ENCODE measurements at regions of chr3 and their contacts with region 1.

Region 1: DNA sequence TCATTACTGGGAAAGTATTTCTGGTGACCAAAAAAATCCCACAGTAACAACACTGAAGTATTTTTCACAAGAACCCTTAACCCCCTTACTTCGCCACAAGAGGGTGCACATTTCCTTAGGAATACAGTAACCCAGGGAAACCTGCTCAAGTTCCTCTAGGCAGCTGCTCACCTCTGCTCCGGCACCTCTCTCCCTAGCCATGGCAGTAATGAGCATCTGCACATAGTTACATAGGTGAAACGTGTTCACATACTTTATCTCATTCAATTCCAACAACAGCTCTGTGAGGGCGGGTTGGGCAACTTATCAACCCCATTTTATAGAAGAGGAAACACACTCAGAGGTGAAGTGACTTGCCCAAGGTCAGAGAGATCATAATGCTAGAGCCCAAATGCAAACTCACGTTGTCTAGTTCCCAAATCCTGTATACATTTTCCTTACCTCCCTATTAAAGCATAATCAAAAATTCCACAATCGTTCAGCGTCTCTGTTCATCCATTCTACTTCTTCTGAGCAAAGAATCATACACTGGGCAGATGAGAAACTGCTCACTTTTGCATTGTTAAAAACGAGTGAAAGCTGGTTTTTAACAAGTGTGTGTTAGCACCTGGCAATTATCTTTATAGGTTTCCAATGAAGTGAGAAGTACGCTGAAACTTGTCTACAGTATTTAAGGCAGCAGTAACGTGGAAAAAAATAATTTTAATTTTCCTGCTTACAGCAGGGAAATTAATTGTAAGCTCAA is 90.7 kb downstream of the IGF2BP2 start:
- DNase-seq: no peak
- H3K4me3 ChIP-seq: no peak overlapping the region
- H3K27ac ChIP-seq: no peak overlapping the region
- H3K4me1 ChIP-seq: peaks cover 0 to 15% (median 4%) of the 10 kb centered on the region in 4 experiments; a peak in 5 of 7 replicates
- H3K27me3 ChIP-seq: no peaks in the 10 kb centered on the region
- CTCF ChIP-seq: peak; percentile 8 to 75 (median 71)
- EP300 ChIP-seq: no peak
- POLR2A ChIP-seq: no peak
- RAD21 ChIP-seq: peak; percentile 91 to 93

Region 2: DNA sequence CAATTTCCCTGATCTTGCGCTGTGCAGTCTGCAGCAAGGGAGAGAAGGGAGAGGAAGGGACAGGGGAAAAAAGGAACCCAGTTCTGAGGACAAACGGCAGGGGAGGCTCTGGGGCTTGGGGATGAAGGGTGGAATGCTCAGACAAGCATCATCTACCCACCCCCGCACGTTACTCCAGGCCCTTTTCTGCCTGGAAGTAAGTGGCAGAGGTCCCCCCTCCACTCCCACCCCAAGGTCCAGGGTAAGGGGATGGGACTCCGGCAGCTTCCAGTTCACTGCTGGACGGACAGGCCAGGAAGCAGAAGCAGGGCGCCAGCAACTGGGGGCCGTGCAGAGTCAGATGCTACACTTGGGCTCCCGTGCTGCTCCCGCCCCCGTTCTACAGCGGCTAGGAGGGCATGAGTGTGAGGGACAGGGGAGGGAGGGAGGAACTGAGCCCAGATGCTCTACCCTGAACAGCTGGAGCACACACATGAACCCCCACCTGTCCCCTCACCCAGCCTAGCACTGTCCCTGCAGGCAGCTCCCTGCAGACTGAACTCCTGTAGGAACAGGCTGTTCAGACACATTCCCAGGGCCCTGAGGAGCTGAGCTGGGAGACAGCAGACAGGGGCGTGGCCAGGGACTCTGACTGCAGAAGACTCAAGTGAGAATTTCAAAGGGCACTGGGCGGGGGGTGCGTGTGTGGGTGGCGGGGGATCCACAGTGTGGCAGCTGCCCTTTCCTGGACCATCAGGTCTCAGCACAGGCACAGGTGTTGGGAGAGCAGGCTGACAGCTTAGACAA is 88.4 kb before region 1 on chr3:
- CTCF ChIA-PET with region 1: no interaction called
- POLR2A ChIA-PET with region 1: no interaction called
- DNase-seq: no peak
- H3K4me3 ChIP-seq: no peak overlapping the region
- H3K27ac ChIP-seq: no peak overlapping the region; the same call in 1 of the 2 replicates
- H3K4me1 ChIP-seq: peaks cover 5 to 20% (median 12%) of the 10 kb centered on the region in 4 experiments
- H3K27me3 ChIP-seq: no peaks in the 10 kb centered on the region
- CTCF ChIP-seq: no peak
- EP300 ChIP-seq: no peak
- POLR2A ChIP-seq: no peak
- RAD21 ChIP-seq: no peak

Region 3: DNA sequence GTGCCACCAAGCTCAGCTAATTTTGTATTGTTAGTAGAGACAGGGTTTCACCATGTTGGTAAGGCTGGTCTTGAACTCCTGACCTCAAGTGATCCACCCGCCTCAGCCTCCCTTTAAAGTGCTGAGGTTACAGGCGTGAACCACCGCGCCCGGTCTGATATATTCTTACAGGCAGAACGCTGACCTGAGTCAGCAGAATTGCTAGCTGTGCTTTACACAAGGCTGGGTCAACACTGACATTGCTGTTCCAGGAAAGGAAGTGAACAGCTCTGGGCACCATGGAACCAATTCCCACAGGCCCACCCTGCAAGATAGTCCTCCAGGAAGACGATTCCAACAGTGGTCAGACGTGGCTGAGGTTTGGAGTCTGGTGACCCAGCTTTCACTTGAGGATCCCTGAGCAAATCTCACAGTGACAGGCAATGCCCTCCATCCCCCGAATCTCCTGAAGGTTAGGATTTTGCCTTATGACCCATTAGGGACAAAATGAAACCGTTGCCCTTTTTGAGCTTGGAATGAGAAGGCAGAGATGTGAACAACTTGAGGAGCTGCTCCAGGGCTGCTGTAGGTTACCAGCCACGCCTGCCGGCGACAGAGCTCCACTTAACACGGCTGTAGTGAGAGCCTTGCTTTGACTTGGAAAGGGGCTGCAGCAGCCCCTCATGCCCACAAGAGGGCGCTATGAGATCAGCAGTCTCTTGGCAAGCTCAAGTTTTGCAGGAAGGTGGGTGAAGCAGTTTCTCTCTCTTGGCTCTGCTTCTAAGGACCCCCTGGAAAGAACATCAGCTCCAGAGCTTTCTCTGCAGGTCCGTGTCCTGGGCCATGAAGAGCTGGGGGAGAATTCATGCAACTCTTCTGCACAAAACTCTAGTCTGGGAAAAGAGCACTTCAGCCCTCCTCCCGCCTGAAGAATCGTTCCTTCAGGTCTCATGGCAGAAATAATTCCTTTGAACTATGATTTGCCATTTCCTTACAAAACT is 73.9 kb before region 1 on chr3:
- CTCF ChIA-PET with region 1: interaction called, 18 read pairs
- POLR2A ChIA-PET with region 1: no interaction called
- DNase-seq: peak; percentile 61 to 86
- H3K4me3 ChIP-seq: no peak overlapping the region
- H3K27ac ChIP-seq: no peak overlapping the region
- H3K4me1 ChIP-seq: peaks cover 0 to 3% (median under 1%) of the 10 kb centered on the region in 4 experiments; a peak in 3 of 7 replicates
- H3K27me3 ChIP-seq: no peaks in the 10 kb centered on the region
- CTCF ChIP-seq: peak; percentile 92 to 100 (median 93)
- EP300 ChIP-seq: no peak
- POLR2A ChIP-seq: no peak; a peak in 1 of 3 replicates
- RAD21 ChIP-seq: peak; percentile 96 to 97

Region 4: DNA sequence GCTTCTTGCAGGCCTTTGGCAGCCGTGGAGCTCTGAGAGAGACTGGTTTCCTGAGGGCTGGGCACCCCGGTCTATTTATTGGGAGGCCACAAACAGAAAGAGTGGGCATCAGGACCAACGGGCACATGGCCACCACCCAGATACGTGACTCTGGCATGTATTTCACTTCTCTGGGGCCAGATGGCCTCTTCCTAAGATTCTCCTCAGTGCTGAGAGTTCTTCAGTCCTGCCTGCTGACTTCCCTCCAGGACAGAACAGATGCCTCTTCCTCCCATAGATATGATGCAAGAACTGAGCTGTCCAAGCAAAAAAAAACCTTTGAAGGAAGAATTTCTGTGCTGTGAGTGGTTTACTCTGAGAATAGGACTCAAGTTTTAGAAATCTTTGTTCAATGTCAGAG is 17.0 kb before region 1 on chr3:
- CTCF ChIA-PET with region 1: interaction called, 13 read pairs
- POLR2A ChIA-PET with region 1: interaction called, 11 read pairs
- DNase-seq: no peak
- H3K4me3 ChIP-seq: no peak overlapping the region
- H3K27ac ChIP-seq: no peak overlapping the region
- H3K4me1 ChIP-seq: peaks cover 12 to 33% (median 19%) of the 10 kb centered on the region in 4 experiments
- H3K27me3 ChIP-seq: no peaks in the 10 kb centered on the region
- CTCF ChIP-seq: no peak
- EP300 ChIP-seq: no peak
- POLR2A ChIP-seq: no peak
- RAD21 ChIP-seq: no peak

Region 5: GRCh38 chr3:185764163-185764979 is 30.2 kb after region 1 on chr3:
- CTCF ChIA-PET with region 1: interaction called, 345 read pairs
- POLR2A ChIA-PET with region 1: interaction called, 6 read pairs
- DNase-seq: no peak
- H3K4me3 ChIP-seq: no peak overlapping the region
- H3K27ac ChIP-seq: no peak overlapping the region
- H3K4me1 ChIP-seq: peaks cover 0 to 18% (median 8%) of the 10 kb centered on the region in 4 experiments; a peak in 6 of 7 replicates
- H3K27me3 ChIP-seq: no peaks in the 10 kb centered on the region
- CTCF ChIP-seq: no peak
- EP300 ChIP-seq: no peak
- POLR2A ChIP-seq: no peak
- RAD21 ChIP-seq: no peak

Region 6: DNA sequence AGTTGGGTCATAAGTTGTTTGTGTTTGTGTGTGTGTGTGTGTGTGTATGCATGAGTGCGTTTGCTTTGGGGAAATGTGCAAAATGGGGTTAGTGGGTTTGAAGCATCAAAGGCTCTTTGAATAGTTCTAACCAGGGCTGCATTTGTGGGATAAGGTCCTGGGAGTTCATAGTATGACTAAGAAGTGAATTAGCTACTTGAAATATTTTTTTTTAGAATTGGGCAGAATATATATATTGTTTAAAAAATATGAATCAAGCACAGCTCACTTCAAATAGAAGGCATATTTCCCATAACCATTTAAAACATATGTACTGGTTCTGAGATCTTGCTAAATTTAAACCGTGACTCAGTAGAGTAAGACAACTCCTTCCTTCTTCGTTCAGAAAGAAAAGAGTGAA is 47.6 kb after region 1 on chr3:
- CTCF ChIA-PET with region 1: interaction called, 43 read pairs
- POLR2A ChIA-PET with region 1: interaction called, 5 read pairs
- DNase-seq: no peak
- H3K4me3 ChIP-seq: no peak overlapping the region
- H3K27ac ChIP-seq: no peak overlapping the region
- H3K4me1 ChIP-seq: peaks cover 7 to 40% (median 26%) of the 10 kb centered on the region in 4 experiments; a peak in 6 of 7 replicates
- H3K27me3 ChIP-seq: no peaks in the 10 kb centered on the region
- CTCF ChIP-seq: no peak
- EP300 ChIP-seq: no peak
- POLR2A ChIP-seq: no peak
- RAD21 ChIP-seq: no peak

Region 7: GRCh38 chr3:185824476-185825378 is 90.6 kb after region 1 on chr3 and contains the start of gene IGF2BP2:
- CTCF ChIA-PET with region 1: interaction called, 31 read pairs
- POLR2A ChIA-PET with region 1: interaction called, 6 read pairs
- DNase-seq: peak in 1 of 2 experiments; percentile 79
- H3K4me3 ChIP-seq: peak within 1 kb of the TSS; percentile 87 to 99 (median 88)
- H3K27ac ChIP-seq: peak within 1 kb of the TSS; percentile 78
- H3K4me1 ChIP-seq: peaks cover 3 to 16% (median 10%) of the 10 kb centered on the region in 4 experiments; a peak in 6 of 7 replicates
- H3K27me3 ChIP-seq: peaks cover 0 to 6% (median 4%) of the 10 kb centered on the region in 4 experiments; a peak in 4 of 7 replicates
- CTCF ChIP-seq: peak in 2 of 3 experiments; percentile 6 to 25; a peak in 2 of 4 replicates
- EP300 ChIP-seq: no peak
- POLR2A ChIP-seq: peak; percentile 51 to 81
- RAD21 ChIP-seq: peak in 1 of 2 experiments; percentile 24; a peak in 1 of 4 replicates
- total RNA-seq, gene IGF2BP2: 114 and 121 TPM in 2 replicates

Measured in H1 (cell line).